Common myeloid progenitor, CD34-positive (primary cell): ENCODE measurements at regions of chr14 and their contacts with region 1.

Region 1: DNA sequence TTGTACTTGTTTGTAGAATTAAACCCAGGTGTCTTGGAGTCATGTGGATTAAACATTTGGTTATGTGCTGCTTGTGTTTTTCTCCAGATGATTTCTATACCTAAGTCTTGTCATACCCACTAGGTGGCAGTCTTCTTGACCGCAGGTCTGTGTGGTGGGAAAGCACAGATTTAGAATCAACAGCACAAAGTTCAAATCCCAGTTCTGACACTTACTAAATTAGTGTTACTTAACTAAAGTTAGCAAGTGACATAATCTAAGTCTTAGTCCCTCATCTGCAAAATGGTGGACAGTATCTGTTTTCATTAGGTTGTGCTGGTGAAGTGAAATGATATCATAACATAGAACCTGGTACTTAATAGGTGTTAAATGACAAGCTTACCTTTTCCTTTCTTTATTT is 151.0 kb upstream of the ARHGAP5 start:
- DNase-seq: peak; percentile 44 to 71 (median 70)
- H3K4me3 ChIP-seq: no peak overlapping the region
- H3K27ac ChIP-seq: no peak overlapping the region
- H3K4me1 ChIP-seq: no peaks in the 10 kb centered on the region
- H3K27me3 ChIP-seq: peaks cover 0 to 2% (median 0%) of the 10 kb centered on the region in 5 experiments

Region 2: GRCh38 chr14:32259368-32260013 is 333.4 kb after region 1 on chr14:
- CTCF ChIA-PET with region 1: interaction called, 102 read pairs
- POLR2A ChIA-PET with region 1: no interaction called
- DNase-seq: peak; percentile 34 to 79 (median 72)
- H3K4me3 ChIP-seq: no peak overlapping the region
- H3K27ac ChIP-seq: no peak overlapping the region
- H3K4me1 ChIP-seq: peaks cover 6 to 20% (median 13%) of the 10 kb centered on the region in 4 experiments
- H3K27me3 ChIP-seq: no peaks in the 10 kb centered on the region